Common myeloid progenitor, CD34-positive (primary cell): ENCODE measurements at regions of chr4 and their contacts with region 1.

Region 1: DNA sequence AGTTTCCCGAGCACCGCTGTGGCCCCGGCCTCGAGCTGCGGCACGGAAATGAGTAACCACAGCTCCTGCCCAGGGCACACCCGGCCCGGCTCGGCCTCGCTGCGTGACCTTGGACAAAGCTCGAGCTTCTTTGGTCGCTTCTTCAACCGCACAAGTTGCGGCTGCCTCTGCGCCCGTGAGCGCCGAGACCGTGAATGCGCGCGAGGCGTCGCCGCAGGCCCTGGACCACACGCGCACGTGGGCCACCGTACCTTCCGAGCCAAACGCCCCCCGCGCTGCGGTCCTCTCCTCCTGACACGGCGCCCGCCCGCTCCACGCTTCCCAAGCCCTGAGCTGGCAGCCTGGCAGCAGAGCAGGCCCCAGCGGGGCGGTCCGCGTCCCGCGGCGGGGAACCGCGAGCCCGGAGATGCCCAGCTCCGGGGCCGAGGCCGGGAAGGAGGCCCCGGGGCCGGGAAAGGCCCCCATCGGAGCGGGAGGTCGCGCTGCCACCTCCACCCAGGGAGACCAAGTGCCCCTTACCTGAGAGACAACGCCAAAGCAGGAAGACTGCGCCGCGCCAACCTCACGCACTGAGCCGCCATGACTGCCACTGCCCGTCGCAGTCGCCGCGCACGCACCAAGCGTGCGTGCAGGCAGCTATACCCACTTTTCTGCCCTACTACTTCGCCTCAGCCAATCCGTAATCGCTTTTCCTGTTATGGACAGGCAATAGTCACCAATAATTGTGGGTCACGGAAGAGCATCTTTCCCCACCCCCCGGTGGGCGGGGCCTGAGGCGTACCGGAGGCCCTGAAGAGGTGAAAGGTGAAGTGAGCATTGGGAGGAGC is at the start of gene GRPEL1:
- DNase-seq: peak; percentile 98 to 99 (median 99)
- H3K4me3 ChIP-seq: peak within 1 kb of the TSS; percentile 64 to 86 (median 77)
- H3K27ac ChIP-seq: peak within 1 kb of the TSS in 1 of 2 experiments; percentile 57
- H3K4me1 ChIP-seq: peaks cover 8 to 31% (median 28%) of the 10 kb centered on the region in 4 experiments
- H3K27me3 ChIP-seq: peaks cover 0 to 46% (median 12%) of the 10 kb centered on the region in 5 experiments

Region 2: GRCh38 chr4:6716018-6716911 is 351.4 kb before region 1 on chr4 and contains the start of gene BLOC1S4:
- CTCF ChIA-PET with region 1: interaction called, 14 read pairs
- POLR2A ChIA-PET with region 1: no interaction called
- DNase-seq: peak; percentile 93 to 96 (median 95)
- H3K4me3 ChIP-seq: peak within 1 kb of the TSS; percentile 50 to 88 (median 73)
- H3K27ac ChIP-seq: peak within 1 kb of the TSS in 1 of 2 experiments; percentile 75
- H3K4me1 ChIP-seq: peaks cover 13 to 25% (median 18%) of the 10 kb centered on the region in 4 experiments
- H3K27me3 ChIP-seq: peaks cover 0 to 2% (median 0%) of the 10 kb centered on the region in 5 experiments

Region 3: GRCh38 chr4:7031526-7032449 is 35.9 kb before region 1 on chr4:
- CTCF ChIA-PET with region 1: interaction called, 10 read pairs
- POLR2A ChIA-PET with region 1: no interaction called
- DNase-seq: peak; percentile 55 to 95 (median 88)
- H3K4me3 ChIP-seq: no peak overlapping the region
- H3K27ac ChIP-seq: no peak overlapping the region
- H3K4me1 ChIP-seq: peaks cover 0 to 17% (median 13%) of the 10 kb centered on the region in 4 experiments
- H3K27me3 ChIP-seq: peaks cover 0 to 32% (median 3%) of the 10 kb centered on the region in 5 experiments

Region 4: GRCh38 chr4:7052923-7053715 is 14.5 kb before region 1 on chr4:
- CTCF ChIA-PET with region 1: interaction called, 113 read pairs
- POLR2A ChIA-PET with region 1: no interaction called
- DNase-seq: peak; percentile 80 to 93 (median 93)
- H3K4me3 ChIP-seq: peak overlapping the region in 4 of 7 experiments; percentile 1 to 16 (median 10)
- H3K27ac ChIP-seq: no peak overlapping the region
- H3K4me1 ChIP-seq: peaks cover 0 to 25% (median 17%) of the 10 kb centered on the region in 4 experiments
- H3K27me3 ChIP-seq: peaks cover 0 to 84% (median 28%) of the 10 kb centered on the region in 5 experiments

Region 5: GRCh38 chr4:7101692-7102515 is 34.2 kb after region 1 on chr4:
- CTCF ChIA-PET with region 1: interaction called, 11 read pairs
- POLR2A ChIA-PET with region 1: no interaction called
- DNase-seq: peak; percentile 45 to 65 (median 50)
- H3K4me3 ChIP-seq: peak overlapping the region in 2 of 7 experiments; percentile 40 to 84
- H3K27ac ChIP-seq: no peak overlapping the region
- H3K4me1 ChIP-seq: peaks cover 0 to 19% (median 15%) of the 10 kb centered on the region in 4 experiments
- H3K27me3 ChIP-seq: peaks cover 0 to 46% (median 20%) of the 10 kb centered on the region in 5 experiments